ENCODE measurements at regions of chr3 and their contacts with region 1.

Region 1: GRCh38 chr3:9890249-9891071 is at the start of gene JAGN1:
- DNase-seq: peak; percentile 83
- H3K4me3 Mint-ChIP-seq: peak within 1 kb of the TSS; percentile 97
- H3K27ac Mint-ChIP-seq: peak within 1 kb of the TSS; percentile 99
- H3K4me1 Mint-ChIP-seq: peaks cover 31% of the 10 kb centered on the region
- H3K27me3 Mint-ChIP-seq: no peaks in the 10 kb centered on the region
- total RNA-seq, gene JAGN1: 31.7 and 33.3 TPM in 2 replicates

Region 2: GRCh38 chr3:9843715-9844438 is 46.6 kb before region 1 on chr3 and contains the start of gene RPUSD3:
- intact Hi-C with region 1: loop called (anchors 2 kb)
- DNase-seq: peak; percentile 94
- H3K4me3 Mint-ChIP-seq: peak within 1 kb of the TSS; percentile 98
- H3K27ac Mint-ChIP-seq: peak within 1 kb of the TSS; percentile 94
- H3K4me1 Mint-ChIP-seq: peaks cover 16% of the 10 kb centered on the region
- H3K27me3 Mint-ChIP-seq: no peaks in the 10 kb centered on the region
- total RNA-seq, gene RPUSD3: 70.0 and 71.1 TPM in 2 replicates

Region 3: GRCh38 chr3:9855594-9855993 is 34.9 kb before region 1 on chr3:
- intact Hi-C with region 1: no loop called
- DNase-seq: no peak
- H3K4me3 Mint-ChIP-seq: no peak overlapping the region
- H3K27ac Mint-ChIP-seq: no peak overlapping the region
- H3K4me1 Mint-ChIP-seq: peaks cover 6% of the 10 kb centered on the region
- H3K27me3 Mint-ChIP-seq: peaks cover 22% of the 10 kb centered on the region

Region 4: GRCh38 chr3:9902372-9903237 is 12.1 kb after region 1 on chr3 and contains the start of gene IL17RE:
- intact Hi-C with region 1: loop called (anchors 1 kb)
- DNase-seq: no peak
- H3K4me3 Mint-ChIP-seq: peak within 1 kb of the TSS; percentile 18
- H3K27ac Mint-ChIP-seq: peak within 1 kb of the TSS; percentile 67
- H3K4me1 Mint-ChIP-seq: peaks cover 25% of the 10 kb centered on the region
- H3K27me3 Mint-ChIP-seq: no peaks in the 10 kb centered on the region
- total RNA-seq, gene IL17RE: 0.78 and 1.0 TPM in 2 replicates

Region 5: DNA sequence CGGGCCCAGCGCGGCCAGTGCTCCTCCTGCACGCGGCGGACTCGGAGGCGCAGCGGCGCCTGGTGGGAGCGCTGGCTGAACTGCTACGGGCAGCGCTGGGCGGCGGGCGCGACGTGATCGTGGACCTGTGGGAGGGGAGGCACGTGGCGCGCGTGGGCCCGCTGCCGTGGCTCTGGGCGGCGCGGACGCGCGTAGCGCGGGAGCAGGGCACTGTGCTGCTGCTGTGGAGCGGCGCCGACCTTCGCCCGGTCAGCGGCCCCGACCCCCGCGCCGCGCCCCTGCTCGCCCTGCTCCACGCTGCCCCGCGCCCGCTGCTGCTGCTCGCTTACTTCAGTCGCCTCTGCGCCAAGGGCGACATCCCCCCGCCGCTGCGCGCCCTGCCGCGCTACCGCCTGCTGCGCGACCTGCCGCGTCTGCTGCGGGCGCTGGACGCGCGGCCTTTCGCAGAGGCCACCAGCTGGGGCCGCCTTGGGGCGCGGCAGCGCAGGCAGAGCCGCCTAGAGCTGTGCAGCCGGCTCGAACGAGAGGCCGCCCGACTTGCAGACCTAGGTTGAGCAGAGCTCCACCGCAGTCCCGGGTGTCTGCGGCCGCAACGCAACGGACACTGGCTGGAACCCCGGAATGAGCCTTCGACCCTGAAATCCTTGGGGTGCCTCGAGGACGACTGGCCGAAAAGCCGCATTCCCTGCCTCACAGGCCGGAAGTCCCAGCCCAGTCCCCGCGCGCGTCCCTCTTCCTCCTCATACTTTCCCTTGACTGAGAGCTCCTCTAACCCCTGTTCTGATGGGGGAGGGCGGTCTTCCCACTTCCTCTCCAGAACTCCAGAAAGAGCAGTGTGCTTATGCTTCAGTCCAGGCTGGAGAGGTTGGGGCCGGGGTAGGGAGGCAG is 25.0 kb after region 1 on chr3:
- intact Hi-C with region 1: loop called (anchors 2 kb)
- DNase-seq: no peak
- H3K4me3 Mint-ChIP-seq: peak overlapping the region; percentile 68
- H3K27ac Mint-ChIP-seq: no peak overlapping the region
- H3K4me1 Mint-ChIP-seq: peaks cover 12% of the 10 kb centered on the region
- H3K27me3 Mint-ChIP-seq: peaks cover 13% of the 10 kb centered on the region

Region 6: GRCh38 chr3:10437272-10437994 is 547.0 kb after region 1 on chr3:
- intact Hi-C with region 1: loop called (anchors 5 kb)
- DNase-seq: peak; percentile 40
- H3K4me3 Mint-ChIP-seq: no peak overlapping the region
- H3K27ac Mint-ChIP-seq: peak overlapping the region; percentile 47
- H3K4me1 Mint-ChIP-seq: peaks cover 25% of the 10 kb centered on the region
- H3K27me3 Mint-ChIP-seq: no peaks in the 10 kb centered on the region

Measured in activated T-helper 2 cell treated with anti-CD3 and anti-CD28 coated beads, Interferon-gamma antibody, Interleukin-2, Interleukin-4, amounts not matched to agents 10 μg/mL and 5 μg/mL and 100 μg/mL, durations not matched to agents 14 hours and 24 hours and 36 hours (primary cell).